ENCODE measurements at regions of chr20 and their contacts with region 1.

Region 1: GRCh38 chr20:18287915-18288748 is at the start of gene ZNF133:
- H3K4me3 Mint-ChIP-seq: peak within 1 kb of the TSS; percentile 94
- H3K27ac Mint-ChIP-seq: peak within 1 kb of the TSS; percentile 98
- H3K4me1 Mint-ChIP-seq: peaks cover 17% of the 10 kb centered on the region
- H3K27me3 Mint-ChIP-seq: peaks cover 22% of the 10 kb centered on the region

Region 2: GRCh38 chr20:16729565-16730456 is 1558.3 kb before region 1 on chr20 and contains the start of gene SNRPB2:
- intact Hi-C with region 1: loop called (anchors 10 kb)
- H3K4me3 Mint-ChIP-seq: peak within 1 kb of the TSS; percentile 97
- H3K27ac Mint-ChIP-seq: peak within 1 kb of the TSS; percentile 99
- H3K4me1 Mint-ChIP-seq: peaks cover 26% of the 10 kb centered on the region
- H3K27me3 Mint-ChIP-seq: peaks cover 36% of the 10 kb centered on the region

Region 3: DNA sequence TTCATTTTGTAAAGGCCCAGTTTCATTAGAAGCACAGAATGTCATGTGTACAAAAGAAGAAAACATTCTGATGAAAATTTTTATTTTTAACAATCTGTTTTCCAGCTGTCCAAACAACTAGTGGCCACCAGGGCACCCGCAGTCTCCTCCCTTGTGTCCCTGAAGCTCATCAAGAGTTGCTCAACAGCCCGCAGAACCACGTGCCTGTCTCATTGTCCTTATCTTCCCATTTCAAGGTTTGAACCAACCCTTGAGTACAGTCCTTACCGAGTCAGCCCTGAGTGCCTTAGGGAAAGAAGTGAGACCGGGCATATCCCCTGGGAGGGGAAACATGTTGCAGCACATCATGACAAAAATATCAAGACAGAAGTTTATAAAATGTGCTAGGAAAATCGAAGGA is 15.7 kb before region 1 on chr20:
- intact Hi-C with region 1: no loop called
- H3K4me3 Mint-ChIP-seq: no peak overlapping the region
- H3K27ac Mint-ChIP-seq: no peak overlapping the region
- H3K4me1 Mint-ChIP-seq: no peaks in the 10 kb centered on the region
- H3K27me3 Mint-ChIP-seq: peaks cover 19% of the 10 kb centered on the region

Region 4: DNA sequence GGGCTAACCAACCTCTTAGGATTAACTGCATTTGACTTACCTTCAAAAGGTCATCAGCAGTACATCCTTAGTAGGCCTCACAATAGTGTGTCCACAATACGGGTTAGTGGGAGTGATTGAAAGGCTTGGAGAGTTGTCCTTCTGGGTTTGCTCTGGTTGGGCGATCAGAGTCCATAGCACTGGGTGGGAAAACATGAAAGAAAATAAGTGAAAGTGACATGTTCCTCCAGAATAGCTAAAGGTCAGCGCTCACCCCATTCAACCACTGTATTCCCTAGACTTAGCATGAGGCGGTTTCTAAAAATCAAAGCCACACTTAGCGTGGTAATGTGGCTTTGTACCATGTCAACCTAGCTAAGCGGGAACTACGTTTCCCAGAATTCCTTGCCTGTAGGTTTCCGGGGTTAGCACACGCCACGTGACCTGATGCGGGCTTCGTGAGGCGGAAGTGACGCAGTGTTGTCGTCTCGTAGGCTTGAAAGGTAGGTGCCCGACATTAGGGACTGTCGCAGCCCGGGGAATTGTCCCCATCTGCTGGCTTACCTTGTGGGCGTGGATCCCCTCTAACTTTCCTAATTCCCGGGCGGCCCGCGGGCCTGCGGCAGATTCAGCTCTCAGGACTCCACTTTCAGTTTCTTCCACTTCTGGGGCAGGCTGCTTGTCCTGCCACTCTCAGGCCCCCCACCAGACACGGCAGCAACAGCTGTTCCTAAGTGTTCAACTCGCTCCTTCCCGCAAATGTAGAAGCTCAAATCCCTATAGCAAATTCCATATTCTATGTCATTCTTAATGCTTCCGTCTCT is 505.7 kb after region 1 on chr20:
- intact Hi-C with region 1: loop called (anchors 5 kb)
- H3K4me3 Mint-ChIP-seq: peak overlapping the region; percentile 85
- H3K27ac Mint-ChIP-seq: peak overlapping the region; percentile 96
- H3K4me1 Mint-ChIP-seq: peaks cover 7% of the 10 kb centered on the region
- H3K27me3 Mint-ChIP-seq: peaks cover 25% of the 10 kb centered on the region